ENCODE measurements at regions of chr13 and their contacts with region 1.

Region 1: DNA sequence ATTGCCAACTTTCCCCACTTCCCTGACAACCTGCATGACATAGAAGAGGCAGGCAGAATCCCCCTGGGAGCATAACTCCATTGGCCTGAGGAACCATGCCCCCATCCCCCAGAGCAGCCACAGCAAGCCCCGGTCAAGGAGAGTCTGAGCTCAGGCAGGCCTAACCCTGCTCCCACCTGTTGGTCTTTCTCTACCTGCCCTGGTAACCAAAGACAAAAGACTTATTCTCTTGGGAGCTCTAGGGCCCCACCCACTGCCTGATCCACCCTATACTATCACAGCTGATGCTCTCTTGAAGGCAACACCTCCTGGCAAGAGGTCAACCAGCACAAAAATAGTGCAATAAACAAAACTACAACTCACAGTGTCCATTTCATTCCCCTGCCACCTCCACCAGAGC is 59.3 kb downstream of the TNFSF13B start:
- DNase-seq: no peak
- ATAC-seq: no peak
- H3K4me3 ChIP-seq: no peak overlapping the region
- H3K27ac ChIP-seq: no peak overlapping the region
- H3K4me1 ChIP-seq: no peaks in the 10 kb centered on the region
- H3K27me3 ChIP-seq: peaks cover 12% of the 10 kb centered on the region
- CTCF ChIP-seq: no peak
- POLR2A ChIP-seq: no peak
- RAD21 ChIP-seq: no peak

Region 2: DNA sequence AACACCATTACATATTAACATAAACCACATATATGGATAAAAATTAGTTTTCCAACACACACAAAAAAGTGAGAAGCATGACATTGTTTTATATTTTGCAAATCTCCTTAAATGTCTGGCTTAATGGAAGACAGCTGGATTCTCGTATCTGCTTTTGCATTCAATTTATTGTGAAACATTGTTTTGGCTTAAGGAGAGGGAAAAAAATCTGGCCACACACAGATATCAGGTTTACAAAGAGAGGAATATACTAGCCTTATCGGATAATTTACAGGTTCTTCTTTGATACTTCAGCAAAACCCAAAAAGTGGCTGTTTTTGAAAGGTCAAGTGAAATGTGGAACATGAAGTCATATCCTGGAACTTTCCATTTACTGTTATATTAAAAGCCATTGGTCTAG is 1237.4 kb before region 1 on chr13:
- CTCF ChIA-PET with region 1: no interaction called
- POLR2A ChIA-PET with region 1: no interaction called
- dilution Hi-C with region 1: no loop called
- in situ Hi-C with region 1: no loop called
- intact Hi-C with region 1: no loop called
- DNase-seq: no peak
- ATAC-seq: no peak
- H3K4me3 ChIP-seq: no peak overlapping the region
- H3K27ac ChIP-seq: no peak overlapping the region
- H3K4me1 ChIP-seq: no peaks in the 10 kb centered on the region
- H3K27me3 ChIP-seq: no peaks in the 10 kb centered on the region
- CTCF ChIP-seq: no peak
- POLR2A ChIP-seq: no peak
- RAD21 ChIP-seq: no peak

Region 3: GRCh38 chr13:107817647-107818287 is 511.1 kb before region 1 on chr13:
- CTCF ChIA-PET with region 1: no interaction called
- POLR2A ChIA-PET with region 1: no interaction called
- dilution Hi-C with region 1: no loop called
- in situ Hi-C with region 1: no loop called
- intact Hi-C with region 1: no loop called
- DNase-seq: no peak
- ATAC-seq: no peak
- H3K4me3 ChIP-seq: no peak overlapping the region
- H3K27ac ChIP-seq: no peak overlapping the region
- H3K4me1 ChIP-seq: peaks cover 7% of the 10 kb centered on the region; the same call in 1 of the 2 replicates
- H3K27me3 ChIP-seq: no peaks in the 10 kb centered on the region
- CTCF ChIP-seq: no peak
- POLR2A ChIP-seq: no peak
- RAD21 ChIP-seq: no peak

Region 4: DNA sequence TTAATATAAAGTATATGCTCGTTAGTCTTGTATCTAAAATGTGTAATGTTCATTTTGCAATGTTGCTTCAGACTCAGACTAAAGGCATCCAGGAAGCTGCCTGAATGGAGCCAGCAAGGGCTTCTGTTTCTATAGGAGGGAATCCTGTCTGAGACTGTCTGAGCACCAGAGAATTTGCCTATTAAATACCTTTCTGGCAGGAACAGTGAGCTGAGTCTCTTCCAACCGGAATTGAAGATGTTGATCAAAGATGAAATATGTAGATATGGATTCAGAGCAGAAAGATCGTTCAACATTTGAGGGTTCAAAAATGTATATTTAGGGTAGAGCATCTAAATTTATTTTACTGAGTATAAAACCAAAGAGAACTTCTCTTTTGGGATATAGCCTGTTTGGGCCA is 321.4 kb after region 1 on chr13:
- CTCF ChIA-PET with region 1: no interaction called
- POLR2A ChIA-PET with region 1: interaction called, 10 read pairs
- dilution Hi-C with region 1: no loop called
- in situ Hi-C with region 1: no loop called
- intact Hi-C with region 1: no loop called
- DNase-seq: no peak
- ATAC-seq: no peak
- H3K4me3 ChIP-seq: no peak overlapping the region
- H3K27ac ChIP-seq: no peak overlapping the region
- H3K4me1 ChIP-seq: no peaks in the 10 kb centered on the region
- H3K27me3 ChIP-seq: no peaks in the 10 kb centered on the region
- CTCF ChIP-seq: no peak
- POLR2A ChIP-seq: no peak
- RAD21 ChIP-seq: no peak

Region 5: DNA sequence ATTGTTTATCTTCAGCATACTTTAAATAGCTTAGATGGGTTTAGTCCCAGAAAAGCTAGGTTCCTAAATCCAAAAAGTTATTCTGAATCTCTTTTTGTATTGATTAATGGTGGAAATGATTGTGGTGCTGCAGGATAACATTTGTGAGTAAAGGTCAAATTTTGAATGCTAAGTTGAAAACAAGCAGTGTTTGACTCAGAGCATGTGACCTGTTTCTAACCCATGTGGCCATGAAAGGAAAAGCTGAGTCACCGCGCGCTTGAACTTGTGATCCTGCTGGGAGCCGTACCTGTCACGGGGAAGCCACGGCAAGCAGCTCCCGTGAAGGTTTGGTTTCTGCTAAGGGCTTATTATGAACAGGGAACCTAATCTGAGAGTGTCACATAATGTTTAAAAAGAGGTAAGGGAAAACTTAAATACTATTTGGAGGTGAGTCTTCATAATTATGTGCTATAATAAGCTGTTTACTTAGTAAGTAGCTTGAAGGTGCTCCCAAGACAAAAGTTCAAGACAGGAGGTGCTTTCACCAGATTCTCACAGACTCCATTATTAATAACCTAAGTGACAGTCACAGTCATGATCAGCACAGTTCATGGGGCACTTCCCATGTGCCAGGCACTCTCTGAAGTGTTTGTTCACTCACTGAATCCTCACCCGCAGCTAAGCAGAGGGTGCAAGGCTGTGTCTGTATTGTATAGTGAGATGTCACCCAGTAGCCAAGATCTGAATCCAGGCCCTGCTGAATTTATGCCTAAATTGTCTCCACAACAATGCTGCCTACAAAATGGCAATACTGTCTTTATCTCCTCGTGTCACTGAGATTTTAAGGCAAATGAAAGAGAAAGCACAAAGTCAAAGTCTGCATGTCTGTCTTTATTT is 587.0 kb after region 1 on chr13:
- CTCF ChIA-PET with region 1: no interaction called
- POLR2A ChIA-PET with region 1: no interaction called
- dilution Hi-C with region 1: no loop called
- in situ Hi-C with region 1: no loop called
- intact Hi-C with region 1: no loop called
- DNase-seq: peak; percentile 88
- ATAC-seq: peak; percentile 47
- H3K4me3 ChIP-seq: no peak overlapping the region
- H3K27ac ChIP-seq: peak overlapping the region; percentile 12; the same call in 1 of the 2 replicates
- H3K4me1 ChIP-seq: peaks cover 13% of the 10 kb centered on the region
- H3K27me3 ChIP-seq: peaks cover 7% of the 10 kb centered on the region
- CTCF ChIP-seq: no peak
- POLR2A ChIP-seq: no peak
- RAD21 ChIP-seq: no peak